AG04449 (cell line): ENCODE measurements at regions of chr22 and their contacts with region 1.

Region 1: GRCh38 chr22:23281406-23282088 is 101.2 kb downstream of the BCR start:
- DNase-seq: no peak
- H3K4me3 ChIP-seq: no peak overlapping the region
- CTCF ChIP-seq: peak; percentile 96

Region 2: DNA sequence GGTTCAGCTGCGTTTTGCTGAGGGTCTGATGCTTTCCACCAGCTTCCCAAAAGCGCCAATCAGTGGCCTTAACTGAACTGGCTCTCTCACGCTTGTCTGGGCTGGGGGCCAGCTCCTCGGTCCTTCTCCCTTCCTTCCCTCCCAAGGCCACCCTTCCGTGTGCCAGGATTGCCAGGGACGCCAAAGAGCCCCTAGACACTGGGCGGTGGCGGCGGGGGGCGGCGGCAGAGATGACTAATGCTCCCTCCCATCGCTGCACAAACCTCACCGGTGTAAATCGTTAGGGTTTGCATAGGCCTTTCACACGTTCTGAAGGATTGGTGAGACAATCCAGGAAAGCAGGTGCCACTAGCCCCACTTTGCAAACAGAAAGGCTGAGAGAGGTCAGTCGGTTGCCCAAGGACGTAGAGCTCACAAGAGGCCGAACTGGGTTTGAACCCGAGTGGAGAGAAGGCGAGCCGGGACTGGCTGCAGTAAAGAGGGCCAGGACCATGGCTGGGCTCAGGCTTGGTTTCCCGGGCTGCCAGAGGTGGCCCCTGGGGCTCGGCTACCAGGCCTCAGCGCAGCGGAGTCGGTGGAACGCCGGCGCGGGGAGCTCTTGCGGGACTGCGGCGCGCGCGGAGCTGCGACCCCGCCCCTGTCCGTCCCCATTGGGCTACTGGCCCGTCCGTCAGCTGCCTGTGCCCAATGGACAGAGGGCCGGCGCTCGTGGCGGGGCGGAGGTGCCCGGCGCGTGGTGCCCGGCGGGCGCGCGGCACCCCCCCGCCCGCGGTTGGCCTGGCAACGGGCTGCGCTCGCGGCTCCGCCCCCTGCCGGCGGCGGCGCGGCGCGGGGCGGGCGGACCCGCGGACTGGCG is 211.8 kb before region 1 on chr22:
- CTCF ChIA-PET with region 1: no interaction called
- POLR2A ChIA-PET with region 1: no interaction called
- DNase-seq: peak; percentile 28
- H3K4me3 ChIP-seq: peak overlapping the region; percentile 70
- CTCF ChIP-seq: no peak

Region 3: GRCh38 chr22:23144932-23145873 is 136.3 kb before region 1 on chr22 and contains the start of gene RAB36:
- CTCF ChIA-PET with region 1: interaction called, 19 read pairs
- POLR2A ChIA-PET with region 1: no interaction called
- DNase-seq: peak; percentile 72
- H3K4me3 ChIP-seq: peak within 1 kb of the TSS; percentile 68
- CTCF ChIP-seq: no peak

Region 4: GRCh38 chr22:23152315-23153113 is 129.0 kb before region 1 on chr22:
- CTCF ChIA-PET with region 1: interaction called, 19 read pairs
- POLR2A ChIA-PET with region 1: no interaction called
- DNase-seq: no peak
- H3K4me3 ChIP-seq: no peak overlapping the region
- CTCF ChIP-seq: no peak

Region 5: DNA sequence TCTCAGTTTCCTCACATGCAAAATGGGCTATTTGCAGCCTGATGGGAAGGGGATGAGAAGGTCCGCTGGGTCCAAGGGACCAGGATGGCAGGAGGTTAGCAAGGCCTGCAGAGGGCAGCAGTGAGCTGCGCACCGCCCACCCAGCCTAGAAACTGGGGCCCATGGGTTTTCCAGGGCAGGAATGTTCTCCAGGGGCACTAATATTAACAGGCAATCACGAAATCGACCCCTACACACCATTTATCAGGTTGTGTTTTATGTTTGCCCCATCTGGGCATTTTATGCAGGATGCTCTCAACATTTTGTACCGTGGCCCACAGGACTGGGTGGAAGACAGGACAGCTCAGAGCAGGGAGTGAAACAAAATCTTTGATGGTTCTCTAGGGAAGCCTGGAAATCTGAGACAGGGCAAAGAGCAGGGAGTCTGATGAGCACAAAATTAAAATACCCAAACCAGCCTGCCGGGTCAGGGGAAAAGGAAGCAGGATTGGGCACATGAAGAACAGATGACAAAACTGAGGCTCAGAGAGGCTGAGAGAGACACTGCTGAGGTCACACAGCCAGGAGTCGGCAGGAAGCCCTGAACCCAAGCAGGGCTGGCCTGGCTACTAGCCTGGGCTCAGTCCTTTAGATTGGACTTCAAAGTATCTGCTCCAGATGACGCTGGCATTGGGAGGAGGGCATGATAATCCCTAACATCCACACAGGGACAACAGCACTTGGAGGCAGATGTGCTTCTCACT is 102.9 kb before region 1 on chr22:
- CTCF ChIA-PET with region 1: interaction called, 953 read pairs
- POLR2A ChIA-PET with region 1: interaction called, 6 read pairs
- DNase-seq: no peak
- H3K4me3 ChIP-seq: no peak overlapping the region
- CTCF ChIP-seq: peak; percentile 97

Region 6: GRCh38 chr22:23270212-23270733 is 11.3 kb before region 1 on chr22:
- CTCF ChIA-PET with region 1: interaction called, 31 read pairs
- POLR2A ChIA-PET with region 1: no interaction called
- DNase-seq: no peak
- H3K4me3 ChIP-seq: no peak overlapping the region
- CTCF ChIP-seq: peak; percentile 16